ENCODE measurements at regions of chr1 and their contacts with region 1.

Region 1: GRCh38 chr1:178768423-178768822 is 43.4 kb downstream of the RALGPS2 start:
- ATAC-seq: peak in 3 of 8 experiments; percentile 59 to 68 (median 59)
- H3K4me3 ChIP-seq: no peak overlapping the region
- H3K27ac ChIP-seq: no peak overlapping the region
- H3K4me1 ChIP-seq: no peaks in the 10 kb centered on the region

Region 2: DNA sequence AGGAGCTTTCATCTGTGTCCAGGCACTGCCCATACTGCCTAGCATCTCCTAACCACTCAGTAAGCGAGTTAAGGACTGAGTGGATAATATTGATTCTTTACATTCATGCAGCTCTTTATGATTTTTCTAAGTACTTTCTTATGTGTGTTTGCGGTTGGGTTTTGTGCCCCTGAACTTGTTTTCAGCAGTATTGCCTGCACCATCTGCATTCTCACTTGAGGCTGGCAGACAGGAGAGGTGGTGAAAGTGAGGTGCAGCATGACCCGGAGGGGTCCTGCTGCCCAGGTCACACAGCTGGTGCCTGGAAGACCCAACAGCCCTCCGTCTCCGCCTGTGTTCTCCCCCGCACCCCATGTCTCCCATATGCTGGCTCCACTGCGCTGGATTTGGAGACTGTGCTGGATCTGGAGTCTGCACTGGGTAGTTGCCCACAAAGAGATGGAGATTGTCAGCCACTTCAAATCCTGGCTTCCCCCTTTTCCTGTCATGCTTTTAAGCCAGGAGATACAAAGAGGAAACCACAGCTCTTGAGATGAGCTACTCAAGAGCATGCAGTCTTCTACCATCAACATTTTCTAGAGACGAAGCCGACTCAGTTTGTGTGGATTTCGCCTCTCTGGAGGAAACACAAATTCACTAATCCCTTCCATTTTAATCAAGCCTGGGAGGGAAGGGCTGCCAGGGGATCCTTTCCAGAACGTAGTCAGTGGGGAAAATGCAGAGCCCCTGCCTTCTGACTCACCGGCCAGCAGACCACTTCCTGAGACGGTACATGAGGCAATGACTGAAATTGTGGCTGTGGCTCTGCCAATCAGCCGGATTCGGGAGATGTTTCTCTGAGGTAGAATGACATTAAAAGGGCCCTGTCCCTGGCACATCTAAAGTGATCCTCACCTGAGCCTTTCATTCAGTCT is 174.1 kb after region 1 on chr1:
- in situ Hi-C with region 1: no loop called
- ATAC-seq: no peak
- H3K4me3 ChIP-seq: no peak overlapping the region
- H3K27ac ChIP-seq: no peak overlapping the region
- H3K4me1 ChIP-seq: peaks cover 15 to 28% of the 10 kb centered on the region in 2 donors

Region 3: DNA sequence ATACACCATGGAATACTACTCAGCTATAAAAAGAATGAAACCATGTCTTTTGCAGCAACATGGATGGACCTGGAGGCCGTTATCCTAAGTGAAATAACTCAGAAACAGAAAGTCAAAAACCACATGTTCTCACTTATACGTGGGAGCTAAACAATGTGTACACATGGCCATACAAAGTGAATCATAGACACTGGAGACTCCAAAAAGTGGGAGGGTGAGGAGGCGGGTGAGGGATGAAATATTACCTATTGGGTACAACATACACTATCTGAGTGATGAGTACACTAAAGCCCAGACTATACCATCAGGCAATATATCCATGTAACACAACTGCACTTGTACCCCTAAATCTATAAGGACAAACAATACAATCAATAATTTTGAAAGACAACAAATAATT is 217.8 kb after region 1 on chr1:
- in situ Hi-C with region 1: loop called in 2 of 9 experiments (anchors 10 to 25 kb)
- ATAC-seq: no peak
- H3K4me3 ChIP-seq: no peak overlapping the region
- H3K27ac ChIP-seq: no peak overlapping the region
- H3K4me1 ChIP-seq: no peaks in the 10 kb centered on the region